T-cell (primary cell): ENCODE measurements at regions of chr14 and their contacts with region 1.

Region 1: DNA sequence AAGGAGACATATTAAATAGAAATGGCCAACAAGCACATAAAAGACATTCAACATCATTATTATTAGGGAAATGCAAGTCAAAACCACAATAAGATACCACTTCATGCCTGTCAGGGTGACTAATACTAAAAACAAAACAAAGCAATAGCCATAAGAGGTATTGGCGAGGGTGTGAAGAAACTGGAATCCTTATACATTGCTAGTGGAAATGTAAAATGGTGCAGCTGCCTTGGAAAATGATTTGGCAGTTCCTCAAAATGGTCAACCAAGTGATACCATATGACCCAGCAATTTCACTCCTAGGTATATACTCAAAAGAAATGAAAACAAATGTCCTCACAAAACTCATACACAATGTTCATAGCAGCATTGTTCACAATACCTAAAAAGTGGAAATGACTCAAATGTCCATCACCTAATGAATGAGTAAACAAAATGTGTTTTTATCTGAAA is 27.0 kb downstream of the GPR135 start:
- DNase-seq: no peak
- ATAC-seq: no peak
- H3K4me3 ChIP-seq: no peak overlapping the region
- H3K4me3 Mint-ChIP-seq: no peak overlapping the region
- H3K27ac ChIP-seq: no peak overlapping the region
- H3K27ac Mint-ChIP-seq: no peak overlapping the region
- H3K4me1 ChIP-seq: no peaks in the 10 kb centered on the region
- H3K4me1 Mint-ChIP-seq: no peaks in the 10 kb centered on the region
- H3K27me3 ChIP-seq: no peaks in the 10 kb centered on the region
- H3K27me3 Mint-ChIP-seq: no peaks in the 10 kb centered on the region

Region 2: DNA sequence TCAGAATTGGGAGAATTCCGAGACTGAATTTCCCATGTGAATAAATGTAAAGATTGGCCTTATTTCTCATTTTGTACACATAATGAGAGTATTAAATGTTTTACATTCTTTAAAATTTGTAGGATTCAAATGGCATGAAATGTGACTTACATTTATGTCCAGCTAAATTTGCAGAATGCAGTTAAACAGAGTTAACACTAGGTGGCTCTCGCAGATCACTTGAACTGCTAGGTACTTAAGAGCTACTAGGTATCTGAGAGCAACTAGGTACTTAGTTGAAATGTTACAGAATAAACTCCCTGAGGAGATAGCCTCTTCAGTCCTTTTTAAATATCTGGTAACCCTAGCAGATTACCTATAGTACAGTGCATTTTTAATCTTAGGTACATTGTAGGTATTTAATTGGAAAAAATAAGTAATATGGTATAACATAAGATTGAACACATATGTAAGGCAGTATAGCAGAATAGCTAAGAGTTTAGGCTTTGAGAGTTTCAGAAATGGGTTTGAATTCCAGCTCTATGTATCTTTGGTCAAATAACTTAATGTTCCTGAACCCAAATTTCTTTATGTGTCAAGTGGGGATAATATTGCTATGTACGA is 936.9 kb before region 1 on chr14:
- CTCF ChIA-PET with region 1: interaction called in 1 of 2 experiments, 12 read pairs
- POLR2A ChIA-PET with region 1: no interaction called
- DNase-seq: peak in 12 of 35 experiments; percentile 0 to 66 (median 15)
- ATAC-seq: peak; percentile 52 to 71 (median 62)
- H3K4me3 ChIP-seq: no peak overlapping the region
- H3K4me3 Mint-ChIP-seq: no peak overlapping the region
- H3K27ac ChIP-seq: no peak overlapping the region
- H3K27ac Mint-ChIP-seq: no peak overlapping the region
- H3K4me1 ChIP-seq: no peaks in the 10 kb centered on the region
- H3K4me1 Mint-ChIP-seq: no peaks in the 10 kb centered on the region
- H3K27me3 ChIP-seq: no peaks in the 10 kb centered on the region
- H3K27me3 Mint-ChIP-seq: no peaks in the 10 kb centered on the region

Region 3: GRCh38 chr14:59126710-59127432 is 311.4 kb before region 1 on chr14:
- CTCF ChIA-PET with region 1: interaction called, 17 to 27 read pairs
- POLR2A ChIA-PET with region 1: no interaction called
- DNase-seq: peak in 21 of 35 experiments; percentile 2 to 75 (median 6)
- ATAC-seq: peak; percentile 63 to 83 (median 80)
- H3K4me3 ChIP-seq: no peak overlapping the region
- H3K4me3 Mint-ChIP-seq: no peak overlapping the region
- H3K27ac ChIP-seq: no peak overlapping the region
- H3K27ac Mint-ChIP-seq: peak overlapping the region in 1 of 2 donors; percentile 38
- H3K4me1 ChIP-seq: no peaks in the 10 kb centered on the region
- H3K4me1 Mint-ChIP-seq: no peaks in the 10 kb centered on the region
- H3K27me3 ChIP-seq: no peaks in the 10 kb centered on the region
- H3K27me3 Mint-ChIP-seq: peaks cover 11 to 28% of the 10 kb centered on the region in 2 donors

Region 4: GRCh38 chr14:59454131-59454530 is 15.9 kb after region 1 on chr14:
- CTCF ChIA-PET with region 1: no interaction called
- POLR2A ChIA-PET with region 1: no interaction called
- DNase-seq: no peak
- ATAC-seq: no peak
- H3K4me3 ChIP-seq: no peak overlapping the region
- H3K4me3 Mint-ChIP-seq: no peak overlapping the region
- H3K27ac ChIP-seq: no peak overlapping the region
- H3K27ac Mint-ChIP-seq: no peak overlapping the region
- H3K4me1 ChIP-seq: no peaks in the 10 kb centered on the region
- H3K4me1 Mint-ChIP-seq: no peaks in the 10 kb centered on the region
- H3K27me3 ChIP-seq: no peaks in the 10 kb centered on the region
- H3K27me3 Mint-ChIP-seq: no peaks in the 10 kb centered on the region

Region 5: GRCh38 chr14:59474172-59474571 is 36.0 kb after region 1 on chr14:
- CTCF ChIA-PET with region 1: no interaction called
- POLR2A ChIA-PET with region 1: no interaction called
- DNase-seq: no peak
- ATAC-seq: no peak
- H3K4me3 ChIP-seq: no peak overlapping the region
- H3K4me3 Mint-ChIP-seq: no peak overlapping the region
- H3K27ac ChIP-seq: no peak overlapping the region
- H3K27ac Mint-ChIP-seq: no peak overlapping the region
- H3K4me1 ChIP-seq: no peaks in the 10 kb centered on the region
- H3K4me1 Mint-ChIP-seq: peaks cover 0 to 11% (median 11%) of the 10 kb centered on the region in 3 donors
- H3K27me3 ChIP-seq: no peaks in the 10 kb centered on the region
- H3K27me3 Mint-ChIP-seq: no peaks in the 10 kb centered on the region